GM10248 (cell line): ENCODE measurements at regions of chr11 and their contacts with region 1.

Region 1: DNA sequence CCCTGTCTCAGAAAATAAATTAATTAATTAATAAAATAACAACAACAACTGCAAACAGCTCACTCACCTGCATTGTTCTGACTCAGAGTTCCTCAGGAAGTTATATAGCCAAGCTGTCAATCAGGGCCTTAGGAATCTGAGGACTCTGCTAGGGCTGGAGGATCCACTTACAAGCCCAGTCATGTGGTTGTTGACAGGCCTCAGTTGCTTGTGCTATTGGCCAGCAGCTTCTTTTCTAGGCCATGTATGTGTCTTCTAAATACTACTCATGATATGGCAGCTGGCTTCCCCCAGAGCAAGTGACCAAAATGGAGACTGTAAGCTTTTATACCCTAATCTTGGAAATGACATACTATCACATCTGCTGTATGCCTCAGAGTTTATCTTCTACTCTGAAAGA is 20.8 kb upstream of the ATP5MG start:
- DNase-seq: no peak
- CTCF ChIP-seq: no peak

Region 2: GRCh38 chr11:117690484-117691217 is 689.9 kb before region 1 on chr11:
- CTCF ChIA-PET with region 1: no interaction called
- POLR2A ChIA-PET with region 1: no interaction called
- DNase-seq: peak; percentile 45
- CTCF ChIP-seq: no peak

Region 3: GRCh38 chr11:118366287-118366686 is 14.3 kb before region 1 on chr11:
- CTCF ChIA-PET with region 1: interaction called, 44 read pairs
- POLR2A ChIA-PET with region 1: interaction called, 4 read pairs
- DNase-seq: no peak
- CTCF ChIP-seq: no peak

Region 4: DNA sequence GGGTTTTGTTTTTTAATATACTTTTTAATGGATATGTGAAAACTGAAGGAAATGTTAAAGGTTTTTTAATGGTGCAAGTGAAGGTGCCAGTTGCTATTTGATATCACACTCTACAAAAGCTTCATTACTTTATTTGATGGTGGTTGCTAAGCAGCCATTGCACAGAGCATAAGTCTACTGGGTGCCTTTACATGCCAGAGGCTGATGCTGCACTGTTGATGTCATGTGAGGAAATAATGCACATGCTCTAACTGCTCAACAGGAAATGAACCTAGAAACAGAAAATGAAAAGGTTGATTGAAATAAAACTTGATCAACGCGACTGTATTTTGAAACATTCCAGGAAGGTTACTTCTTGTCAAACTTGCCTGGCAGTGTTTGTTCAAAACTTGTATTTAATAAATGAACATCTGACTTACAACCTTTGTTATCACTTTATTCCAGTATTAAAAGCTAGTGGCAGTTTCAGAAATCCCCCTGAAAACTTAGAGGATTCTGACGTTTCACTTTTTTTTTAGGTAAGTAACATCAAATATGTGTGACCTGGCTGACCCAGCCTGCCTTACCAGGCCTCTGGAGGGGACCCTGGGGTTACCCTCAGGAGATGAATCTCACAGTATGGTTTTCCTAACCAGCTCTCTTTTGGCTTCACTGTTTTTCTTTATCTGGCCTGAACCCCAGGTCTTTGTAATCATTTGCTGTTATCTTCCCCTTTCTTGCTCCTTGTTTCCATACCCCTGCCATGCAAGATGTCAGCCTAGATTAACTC is 18.4 kb after region 1 on chr11:
- CTCF ChIA-PET with region 1: interaction called, 30 read pairs
- POLR2A ChIA-PET with region 1: no interaction called
- DNase-seq: no peak
- CTCF ChIP-seq: no peak